Activated CD4-positive, alpha-beta memory T cell treated with anti-CD3 and anti-CD28 coated beads, Interleukin-2, amount 10 ng/mL, durations not matched to agents 7 days and 5 days (primary cell): ENCODE measurements at regions of chr10 and their contacts with region 1.

Region 1: GRCh38 chr10:5684318-5684970 is at the start of gene TASOR2:
- DNase-seq: peak; percentile 96
- H3K4me3 Mint-ChIP-seq: peak within 1 kb of the TSS; percentile 92
- H3K27ac Mint-ChIP-seq: peak within 1 kb of the TSS; percentile 93
- H3K4me1 Mint-ChIP-seq: peaks cover 58% of the 10 kb centered on the region
- H3K27me3 Mint-ChIP-seq: peaks cover 4% of the 10 kb centered on the region
- total RNA-seq, gene TASOR2: 35.1 to 37.3 TPM

Region 2: GRCh38 chr10:5629303-5630111 is 54.9 kb before region 1 on chr10:
- CTCF ChIA-PET with region 1: interaction called, 11 read pairs
- POLR2A ChIA-PET with region 1: no interaction called
- DNase-seq: peak; percentile 87
- H3K4me3 Mint-ChIP-seq: peak overlapping the region; percentile 25
- H3K27ac Mint-ChIP-seq: peak overlapping the region; percentile 78
- H3K4me1 Mint-ChIP-seq: peaks cover 35% of the 10 kb centered on the region
- H3K27me3 Mint-ChIP-seq: peaks cover 5% of the 10 kb centered on the region

Region 3: GRCh38 chr10:5654218-5654755 is 30.2 kb before region 1 on chr10:
- CTCF ChIA-PET with region 1: interaction called, 11 read pairs
- POLR2A ChIA-PET with region 1: no interaction called
- DNase-seq: no peak
- H3K4me3 Mint-ChIP-seq: no peak overlapping the region
- H3K27ac Mint-ChIP-seq: no peak overlapping the region
- H3K4me1 Mint-ChIP-seq: peaks cover 32% of the 10 kb centered on the region
- H3K27me3 Mint-ChIP-seq: no peaks in the 10 kb centered on the region

Region 4: DNA sequence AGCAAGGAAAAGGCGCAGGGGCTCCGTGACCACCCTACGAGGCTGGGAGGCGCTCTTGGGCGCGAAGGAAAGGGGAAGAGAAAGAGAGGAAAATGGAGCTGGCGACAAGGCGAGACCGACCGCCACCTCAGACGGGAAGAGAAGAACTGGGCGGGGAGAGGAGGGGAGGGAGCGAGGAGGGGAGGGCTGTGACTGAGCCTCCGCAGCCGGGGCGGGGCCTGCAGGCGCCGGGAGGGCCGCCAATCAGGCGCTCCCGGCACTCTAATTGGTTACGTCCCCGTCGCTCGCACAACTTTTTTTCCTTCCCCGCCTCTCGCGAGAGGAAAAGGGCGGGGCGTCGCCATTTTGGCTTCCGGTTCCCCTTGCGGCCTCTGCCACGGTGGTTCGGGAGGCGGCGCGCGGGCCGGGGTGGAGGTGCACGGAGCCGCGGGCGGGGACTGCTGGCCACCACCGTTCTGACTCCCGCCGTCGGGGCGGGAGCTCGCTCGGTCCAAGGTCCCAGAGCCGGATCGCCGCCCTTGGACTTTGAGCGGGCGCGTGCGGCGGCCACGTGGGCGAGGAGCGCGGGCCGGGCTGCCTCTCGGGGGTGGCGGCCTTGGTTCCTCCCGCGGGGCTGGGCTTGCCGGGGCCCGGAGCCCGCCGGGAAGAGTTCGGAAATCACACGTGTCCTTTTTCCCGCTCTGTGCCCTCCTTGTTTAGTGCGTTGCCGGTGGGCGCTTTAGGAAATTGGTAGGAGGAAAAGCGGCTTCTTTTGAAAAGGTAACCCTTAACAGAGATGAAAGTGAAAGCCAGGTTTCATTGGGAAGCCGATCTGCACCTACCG is 129.1 kb after region 1 on chr10 and contains the start of gene GDI2:
- CTCF ChIA-PET with region 1: no interaction called
- POLR2A ChIA-PET with region 1: interaction called, 16 read pairs
- DNase-seq: peak; percentile 97
- H3K4me3 Mint-ChIP-seq: peak within 1 kb of the TSS; percentile 92
- H3K27ac Mint-ChIP-seq: peak within 1 kb of the TSS; percentile 87
- H3K4me1 Mint-ChIP-seq: peaks cover 57% of the 10 kb centered on the region
- H3K27me3 Mint-ChIP-seq: no peaks in the 10 kb centered on the region
- total RNA-seq, gene GDI2: 218 to 220 TPM

Region 5: GRCh38 chr10:5889624-5890451 is 205.4 kb after region 1 on chr10 and contains the starts of genes ANKRD16 and FBH1:
- CTCF ChIA-PET with region 1: interaction called, 3 read pairs
- POLR2A ChIA-PET with region 1: interaction called, 13 read pairs
- DNase-seq: peak; percentile 98
- H3K4me3 Mint-ChIP-seq: peak within 1 kb of the TSS; percentile 91
- H3K27ac Mint-ChIP-seq: peak within 1 kb of the TSS; percentile 68
- H3K4me1 Mint-ChIP-seq: peaks cover 47% of the 10 kb centered on the region
- H3K27me3 Mint-ChIP-seq: no peaks in the 10 kb centered on the region
- total RNA-seq, gene ANKRD16: 3.3 to 5.4 TPM
- total RNA-seq, gene FBH1: 54.8 to 61.6 TPM